ENCODE measurements at regions of chr21 and their contacts with region 1.

Region 1: DNA sequence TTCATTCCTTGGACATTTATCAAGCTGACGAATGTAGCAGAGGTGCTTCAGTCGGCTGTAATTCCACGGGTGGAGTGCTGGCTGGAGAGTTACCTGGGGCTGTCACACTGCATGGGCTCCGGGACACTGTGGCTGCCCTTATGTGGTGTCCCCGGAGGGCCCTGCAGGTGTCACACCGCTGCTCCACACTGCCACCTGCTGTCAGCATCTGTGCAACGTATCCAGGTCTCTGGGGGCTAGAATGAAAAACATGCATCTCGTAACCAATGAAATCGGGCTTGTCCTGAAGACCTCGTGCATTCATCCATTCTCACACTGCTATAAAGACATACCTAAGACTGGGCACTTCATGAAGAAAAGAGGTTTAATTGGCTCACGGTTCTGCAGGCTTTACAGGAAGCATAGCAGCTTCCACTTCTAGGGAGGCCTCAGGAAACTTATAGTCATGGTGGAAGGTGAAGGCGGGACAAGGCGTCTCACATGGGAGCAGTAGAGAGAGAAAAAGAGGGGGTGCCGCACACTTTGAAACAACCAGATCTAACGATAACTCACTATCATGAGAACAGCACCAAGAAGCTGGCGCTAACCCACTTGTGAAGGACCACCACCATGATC is 46.7 kb upstream of the PCBP3 start:
- DNase-seq: peak; percentile 72 to 91 (median 87)
- ATAC-seq: peak; percentile 69
- H3K4me3 ChIP-seq: no peak overlapping the region
- H3K4me3 Mint-ChIP-seq: no peak overlapping the region
- H3K27ac ChIP-seq: no peak overlapping the region
- H3K27ac Mint-ChIP-seq: no peak overlapping the region
- H3K4me1 ChIP-seq: peaks cover 15% of the 10 kb centered on the region
- H3K4me1 Mint-ChIP-seq: peaks cover 14% of the 10 kb centered on the region
- H3K27me3 ChIP-seq: peaks cover 0 to 1% of the 10 kb centered on the region in 2 experiments
- H3K27me3 Mint-ChIP-seq: no peaks in the 10 kb centered on the region
- CTCF ChIP-seq: peak; percentile 85

Region 2: GRCh38 chr21:45439161-45439872 is 157.5 kb before region 1 on chr21:
- CTCF ChIA-PET with region 1: interaction called, 3 read pairs
- POLR2A ChIA-PET with region 1: no interaction called
- intact Hi-C with region 1: loop called in 1 of 2 experiments (anchors 1 kb)
- DNase-seq: peak; percentile 71 to 93 (median 86)
- ATAC-seq: peak; percentile 87
- H3K4me3 ChIP-seq: peak overlapping the region; percentile 26 to 29
- H3K4me3 Mint-ChIP-seq: peak overlapping the region; percentile 65
- H3K27ac ChIP-seq: peak overlapping the region in 1 of 2 experiments; percentile 40
- H3K27ac Mint-ChIP-seq: no peak overlapping the region
- H3K4me1 ChIP-seq: peaks cover 6% of the 10 kb centered on the region
- H3K4me1 Mint-ChIP-seq: peaks cover 6% of the 10 kb centered on the region
- H3K27me3 ChIP-seq: peaks cover 0 to 9% of the 10 kb centered on the region in 2 experiments
- H3K27me3 Mint-ChIP-seq: peaks cover 11% of the 10 kb centered on the region
- CTCF ChIP-seq: peak; percentile 90

Region 3: GRCh38 chr21:45554477-45555175 is 42.2 kb before region 1 on chr21:
- CTCF ChIA-PET with region 1: interaction called, 17 read pairs
- POLR2A ChIA-PET with region 1: no interaction called
- intact Hi-C with region 1: loop called (anchors 1 kb)
- DNase-seq: peak; percentile 80 to 97 (median 91)
- ATAC-seq: peak; percentile 90
- H3K4me3 ChIP-seq: peak overlapping the region; percentile 73 to 81
- H3K4me3 Mint-ChIP-seq: peak overlapping the region; percentile 91
- H3K27ac ChIP-seq: peak overlapping the region; percentile 37 to 60
- H3K27ac Mint-ChIP-seq: peak overlapping the region; percentile 91
- H3K4me1 ChIP-seq: peaks cover 38% of the 10 kb centered on the region
- H3K4me1 Mint-ChIP-seq: peaks cover 31% of the 10 kb centered on the region
- H3K27me3 ChIP-seq: no peaks in the 10 kb centered on the region
- H3K27me3 Mint-ChIP-seq: no peaks in the 10 kb centered on the region
- CTCF ChIP-seq: peak; percentile 60

Region 4: DNA sequence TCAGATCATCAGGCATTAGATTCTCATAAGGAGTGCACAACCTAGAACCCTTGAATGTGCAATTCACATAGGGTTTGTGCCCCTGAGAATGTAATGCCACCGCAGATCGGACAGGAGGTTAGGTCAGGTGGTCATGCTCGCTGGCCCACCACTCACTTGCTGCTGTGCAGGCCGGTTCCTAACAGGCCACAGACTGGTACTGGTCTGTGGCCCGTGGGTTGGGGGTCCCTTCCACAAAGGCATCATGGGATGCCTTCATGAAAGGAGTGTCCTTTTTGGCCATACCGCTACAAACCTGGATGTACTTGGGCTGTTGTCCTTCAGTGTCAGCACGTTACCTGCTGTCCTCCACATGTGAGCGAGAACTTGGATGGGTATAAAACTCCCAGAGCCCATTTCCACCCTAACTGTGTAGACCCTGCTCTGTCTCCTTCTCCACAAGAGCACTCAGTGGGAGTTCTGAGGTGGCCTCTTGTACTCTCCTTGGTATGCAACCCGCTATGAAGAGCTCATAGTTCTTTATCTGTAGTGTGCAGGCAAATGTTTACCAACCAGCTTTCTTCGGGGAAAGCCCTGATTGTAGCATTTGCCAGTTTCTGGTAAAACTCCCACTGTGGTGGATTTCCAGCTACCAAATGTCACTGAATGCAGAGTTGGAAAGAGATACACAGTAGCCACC is 12.8 kb before region 1 on chr21:
- CTCF ChIA-PET with region 1: interaction called, 15 read pairs
- POLR2A ChIA-PET with region 1: interaction called, 3 read pairs
- intact Hi-C with region 1: no loop called
- DNase-seq: no peak
- ATAC-seq: no peak
- H3K4me3 ChIP-seq: no peak overlapping the region
- H3K4me3 Mint-ChIP-seq: no peak overlapping the region
- H3K27ac ChIP-seq: no peak overlapping the region
- H3K27ac Mint-ChIP-seq: no peak overlapping the region
- H3K4me1 ChIP-seq: no peaks in the 10 kb centered on the region
- H3K4me1 Mint-ChIP-seq: peaks cover 2% of the 10 kb centered on the region
- H3K27me3 ChIP-seq: no peaks in the 10 kb centered on the region
- H3K27me3 Mint-ChIP-seq: peaks cover 6% of the 10 kb centered on the region
- CTCF ChIP-seq: no peak

Region 5: GRCh38 chr21:45820171-45821091 is 223.6 kb after region 1 on chr21:
- CTCF ChIA-PET with region 1: interaction called, 7 read pairs
- POLR2A ChIA-PET with region 1: no interaction called
- intact Hi-C with region 1: loop called (anchors 1 kb)
- DNase-seq: peak; percentile 54 to 86 (median 82)
- ATAC-seq: peak; percentile 72
- H3K4me3 ChIP-seq: no peak overlapping the region
- H3K4me3 Mint-ChIP-seq: no peak overlapping the region
- H3K27ac ChIP-seq: no peak overlapping the region
- H3K27ac Mint-ChIP-seq: peak overlapping the region; percentile 21
- H3K4me1 ChIP-seq: peaks cover 3% of the 10 kb centered on the region
- H3K4me1 Mint-ChIP-seq: peaks cover 18% of the 10 kb centered on the region
- H3K27me3 ChIP-seq: no peaks in the 10 kb centered on the region
- H3K27me3 Mint-ChIP-seq: peaks cover 5% of the 10 kb centered on the region
- CTCF ChIP-seq: peak; percentile 80

Measured in CD8-positive, alpha-beta T cell (primary cell).